Dorsolateral prefrontal cortex (tissue), 120 donors: ENCODE measurements at regions of chr11 and their contacts with region 1.

Region 1: DNA sequence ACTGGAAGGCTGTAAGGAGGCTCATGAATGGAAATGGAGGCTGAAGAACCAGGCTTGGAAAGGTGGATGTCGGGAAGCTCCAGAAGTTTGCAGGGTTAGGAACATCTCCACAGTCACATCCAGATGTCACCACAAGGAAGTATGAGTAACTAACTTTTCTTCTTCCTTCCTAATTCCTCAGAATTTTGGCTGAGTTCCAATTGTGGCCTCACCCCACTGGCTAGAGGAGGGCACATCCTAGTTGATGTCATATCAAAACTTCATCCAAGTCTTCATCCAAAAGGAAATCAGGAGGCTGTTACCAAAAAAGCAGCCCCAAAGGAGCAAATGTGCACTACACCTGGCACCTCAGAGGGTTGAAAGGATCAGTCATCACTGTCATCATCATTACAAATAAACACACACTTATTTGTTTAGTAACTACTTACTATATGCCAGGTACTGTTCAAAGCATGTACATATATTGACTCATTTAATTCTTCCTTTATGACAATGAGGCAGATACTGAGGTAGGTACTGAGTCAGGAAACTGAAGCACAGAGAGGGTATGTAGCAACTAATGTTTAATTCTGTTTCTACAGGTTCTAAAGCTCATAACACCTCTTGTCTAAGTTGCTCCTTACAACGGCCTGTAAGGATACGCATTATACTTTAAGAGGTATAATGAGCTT is 7.3 kb upstream of the PTPN5 start:
- DNase-seq: no peak
- H3K4me3 ChIP-seq: no peak overlapping the region
- H3K27ac ChIP-seq: no peak overlapping the region
- H3K27me3 ChIP-seq: peaks cover 0 to 20% (median 0%) of the 10 kb centered on the region in 45 donors
- CTCF ChIP-seq: no peak

Region 2: DNA sequence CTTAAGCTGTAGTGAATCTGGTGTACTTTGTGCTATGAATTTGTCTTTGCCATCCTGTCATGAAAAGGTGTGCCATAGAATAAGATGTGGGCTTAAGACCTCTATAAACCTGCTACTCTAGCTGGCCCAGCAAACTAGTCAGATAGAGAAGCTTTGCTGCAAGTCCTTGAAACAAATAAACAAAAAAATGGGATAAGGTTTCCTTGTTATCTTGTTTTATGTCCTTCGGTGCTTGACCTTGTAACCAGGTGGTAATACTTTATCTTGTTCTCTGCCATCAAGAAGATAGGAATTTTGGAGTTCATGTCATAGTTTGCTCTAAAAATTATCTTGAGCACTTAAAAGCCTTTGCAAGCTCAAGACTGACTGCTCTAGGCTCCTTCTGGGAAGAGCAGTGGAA is 114.7 kb before region 1 on chr11:
- intact Hi-C with region 1: no loop called
- DNase-seq: no peak
- H3K4me3 ChIP-seq: no peak overlapping the region
- H3K27ac ChIP-seq: no peak overlapping the region
- H3K27me3 ChIP-seq: no peaks in the 10 kb centered on the region
- CTCF ChIP-seq: no peak

Region 3: DNA sequence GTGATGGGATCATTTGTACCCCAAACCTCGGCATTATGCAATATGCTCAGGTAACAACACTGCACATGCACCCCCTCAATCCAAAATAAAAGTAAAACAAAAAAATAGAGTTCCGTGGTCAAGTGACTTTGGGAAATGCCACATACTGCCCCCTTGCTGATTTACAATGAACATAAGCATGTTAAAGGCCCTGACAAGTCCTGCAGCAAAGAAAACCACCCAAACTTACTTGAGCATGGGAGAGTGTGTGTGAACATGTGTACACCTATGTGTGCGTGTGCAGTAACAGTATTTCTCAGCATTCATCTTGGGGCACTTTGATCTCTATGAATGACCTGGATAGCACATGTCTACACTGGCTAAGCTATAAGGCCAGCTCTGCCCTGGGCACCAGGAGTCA is 57.2 kb before region 1 on chr11:
- intact Hi-C with region 1: loop called in 1 of 2 experiments (anchors 2 kb)
- DNase-seq: no peak
- H3K4me3 ChIP-seq: no peak overlapping the region
- H3K27ac ChIP-seq: no peak overlapping the region
- H3K27me3 ChIP-seq: peaks cover 0 to 27% (median 0%) of the 10 kb centered on the region in 45 donors
- CTCF ChIP-seq: no peak